Psoas muscle (tissue), 8 donors: ENCODE measurements at regions of chr19 and their contacts with region 1.

Region 1: DNA sequence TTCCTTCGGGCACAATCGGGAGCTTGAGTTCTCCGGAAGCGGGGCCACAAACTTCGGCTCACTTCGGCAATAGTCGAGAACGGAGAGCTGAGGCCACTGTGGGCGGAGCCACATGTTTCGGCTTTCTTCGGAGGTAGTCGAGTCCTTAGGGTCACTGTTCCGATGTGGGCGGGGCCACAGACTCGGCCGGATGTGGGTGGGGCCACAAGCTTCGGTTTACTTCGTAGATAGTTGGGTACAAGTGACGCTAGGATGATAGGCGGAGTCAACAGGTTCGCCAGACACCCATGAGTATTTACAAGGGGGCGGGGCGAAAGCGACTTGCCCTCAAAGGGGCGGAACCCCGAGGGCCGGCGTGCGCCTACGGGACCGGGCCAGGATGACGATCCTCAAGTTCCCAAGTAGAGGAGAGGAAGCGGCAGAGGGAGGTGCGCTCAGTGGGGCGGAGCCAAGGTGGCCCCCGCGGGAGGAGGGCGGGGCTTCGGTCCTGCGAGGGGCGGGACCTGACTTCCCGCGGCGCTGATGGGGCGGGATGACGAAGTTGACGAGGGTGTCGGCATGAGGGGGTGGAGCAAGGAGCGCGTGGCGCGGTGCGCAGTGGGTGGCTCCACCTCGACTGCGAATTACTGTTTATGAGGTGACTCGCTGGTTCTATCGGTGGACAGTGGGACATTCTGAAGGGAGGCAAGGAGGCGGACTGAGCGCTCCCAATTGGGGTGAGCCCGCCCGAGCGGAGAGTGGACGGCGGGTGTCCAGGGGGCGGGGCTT is 539 bp upstream of the MBOAT7 start:
- DNase-seq: peak; percentile 100
- ATAC-seq: peak; percentile 76 to 81 (median 79)
- H3K4me3 ChIP-seq: peak overlapping the region; percentile 75
- H3K27ac ChIP-seq: peak overlapping the region; percentile 99
- H3K4me1 ChIP-seq: peaks cover 17% of the 10 kb centered on the region
- H3K27me3 ChIP-seq: no peaks in the 10 kb centered on the region
- CTCF ChIP-seq: no peak

Region 2: GRCh38 chr19:53520550-53521372 is 669.2 kb before region 1 on chr19:
- intact Hi-C with region 1: loop called in 1 of 2 experiments (anchors 5 kb)
- DNase-seq: peak; percentile 95 to 98
- ATAC-seq: peak; percentile 97 to 99 (median 98)
- H3K4me3 ChIP-seq: peak overlapping the region; percentile 67
- H3K27ac ChIP-seq: peak overlapping the region; percentile 87
- H3K4me1 ChIP-seq: peaks cover 5% of the 10 kb centered on the region
- H3K27me3 ChIP-seq: no peaks in the 10 kb centered on the region
- CTCF ChIP-seq: no peak

Region 3: GRCh38 chr19:54203151-54203611 is 13.3 kb after region 1 on chr19:
- intact Hi-C with region 1: loop called in 1 of 2 experiments (anchors 1 kb)
- DNase-seq: no peak
- ATAC-seq: peak in 1 of 4 donors; percentile 24
- H3K4me3 ChIP-seq: peak overlapping the region; percentile 80
- H3K27ac ChIP-seq: peak overlapping the region; percentile 86
- H3K4me1 ChIP-seq: peaks cover 64% of the 10 kb centered on the region
- H3K27me3 ChIP-seq: no peaks in the 10 kb centered on the region
- CTCF ChIP-seq: no peak